PC-9 (cell line): ENCODE measurements at regions of chr4 and their contacts with region 1.

Region 1: DNA sequence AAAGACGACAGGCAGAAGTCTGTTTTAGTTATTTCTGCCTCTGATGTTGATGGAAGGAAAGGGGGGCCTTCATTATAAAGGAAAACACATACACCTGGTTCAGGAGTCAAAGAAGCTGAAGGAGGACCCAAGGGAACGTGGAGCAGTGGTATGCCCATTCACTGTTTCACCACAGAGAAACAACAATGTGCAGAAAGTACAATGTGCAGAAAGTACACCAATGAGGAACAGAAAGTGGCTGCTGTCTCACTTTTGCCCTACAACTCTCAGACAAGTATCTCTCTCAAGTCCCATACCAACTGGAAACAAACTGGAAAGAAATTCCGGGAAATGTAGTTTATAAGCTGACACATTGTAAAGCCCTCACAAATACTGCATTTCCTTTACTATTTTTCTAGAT is 564.5 kb downstream of the TRAM1L1 start:
- DNase-seq: no peak
- H3K4me3 ChIP-seq: no peak overlapping the region
- H3K27ac ChIP-seq: no peak overlapping the region
- H3K4me1 ChIP-seq: no peaks in the 10 kb centered on the region
- H3K27me3 ChIP-seq: no peaks in the 10 kb centered on the region
- CTCF ChIP-seq: no peak

Region 2: GRCh38 chr4:116478343-116478742 is 42.5 kb before region 1 on chr4:
- CTCF ChIA-PET with region 1: no interaction called
- POLR2A ChIA-PET with region 1: no interaction called
- intact Hi-C with region 1: no loop called
- DNase-seq: no peak
- H3K4me3 ChIP-seq: no peak overlapping the region
- H3K27ac ChIP-seq: no peak overlapping the region
- H3K4me1 ChIP-seq: no peaks in the 10 kb centered on the region
- H3K27me3 ChIP-seq: no peaks in the 10 kb centered on the region
- CTCF ChIP-seq: no peak

Region 3: GRCh38 chr4:116500225-116500624 is 20.7 kb before region 1 on chr4:
- CTCF ChIA-PET with region 1: no interaction called
- POLR2A ChIA-PET with region 1: no interaction called
- intact Hi-C with region 1: no loop called
- DNase-seq: no peak
- H3K4me3 ChIP-seq: no peak overlapping the region
- H3K27ac ChIP-seq: no peak overlapping the region
- H3K4me1 ChIP-seq: no peaks in the 10 kb centered on the region
- H3K27me3 ChIP-seq: no peaks in the 10 kb centered on the region
- CTCF ChIP-seq: no peak

Region 4: DNA sequence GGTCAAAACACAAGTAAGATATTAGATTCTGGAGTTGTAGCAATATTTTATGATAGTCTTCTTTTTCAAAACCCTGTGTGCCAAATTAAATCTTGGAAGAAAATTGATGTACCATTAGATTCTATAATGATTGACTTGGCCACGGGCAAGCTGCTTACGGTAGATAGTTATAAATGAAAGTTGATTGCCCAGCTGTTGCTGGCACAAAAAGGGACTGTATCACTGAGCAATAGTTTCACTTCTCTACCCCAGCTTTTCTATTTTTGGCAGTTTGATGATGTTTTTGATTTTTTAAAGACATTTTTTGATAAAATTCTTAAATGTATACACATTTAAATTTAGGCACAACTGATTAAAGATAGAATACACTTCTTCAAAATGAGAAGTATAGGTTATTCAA is 231.1 kb after region 1 on chr4:
- CTCF ChIA-PET with region 1: no interaction called
- POLR2A ChIA-PET with region 1: no interaction called
- intact Hi-C with region 1: loop called (anchors 10 kb)
- DNase-seq: no peak
- H3K4me3 ChIP-seq: no peak overlapping the region
- H3K27ac ChIP-seq: no peak overlapping the region
- H3K4me1 ChIP-seq: no peaks in the 10 kb centered on the region
- H3K27me3 ChIP-seq: no peaks in the 10 kb centered on the region
- CTCF ChIP-seq: no peak